AG04449 (cell line): ENCODE measurements at regions of chr17 and their contacts with region 1.

Region 1: DNA sequence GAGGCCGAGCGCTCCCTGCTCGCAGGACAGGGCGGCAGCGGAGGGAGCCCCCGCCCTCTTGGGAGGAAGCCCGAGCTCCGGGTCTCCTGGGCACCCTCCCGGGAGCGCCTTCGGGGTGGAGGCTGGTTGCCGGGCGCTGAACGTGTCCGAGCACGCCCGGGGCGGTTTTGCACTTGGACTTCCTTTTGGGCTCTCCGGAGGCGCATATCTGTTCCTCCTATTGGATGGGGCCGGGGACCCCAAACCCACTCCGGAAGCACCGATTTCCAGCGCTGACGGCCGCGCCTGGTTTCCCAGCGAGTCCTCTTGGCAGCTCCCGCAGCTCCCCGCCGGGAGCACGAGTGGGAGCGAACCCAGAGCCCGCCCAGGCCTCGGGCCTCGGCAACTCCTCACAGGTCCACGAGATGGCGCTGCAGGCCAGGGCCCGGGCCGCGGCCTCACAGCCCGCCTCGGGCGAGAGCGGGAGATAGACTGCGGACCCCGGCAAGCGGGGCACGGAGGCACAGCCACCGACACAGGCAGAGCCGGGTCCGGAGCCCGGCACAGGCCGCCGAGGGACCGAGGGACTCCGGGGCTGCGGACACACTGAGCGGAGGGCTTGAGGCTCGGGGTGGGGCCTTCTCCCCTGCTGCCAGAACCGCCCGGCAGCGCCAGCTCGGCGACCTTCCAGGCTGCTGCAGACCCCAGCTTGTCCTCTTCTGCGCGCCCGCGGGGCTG is 12.7 kb downstream of the TBX2 start:
- DNase-seq: no peak
- H3K4me3 ChIP-seq: peak overlapping the region; percentile 60
- CTCF ChIP-seq: peak; percentile 95

Region 2: DNA sequence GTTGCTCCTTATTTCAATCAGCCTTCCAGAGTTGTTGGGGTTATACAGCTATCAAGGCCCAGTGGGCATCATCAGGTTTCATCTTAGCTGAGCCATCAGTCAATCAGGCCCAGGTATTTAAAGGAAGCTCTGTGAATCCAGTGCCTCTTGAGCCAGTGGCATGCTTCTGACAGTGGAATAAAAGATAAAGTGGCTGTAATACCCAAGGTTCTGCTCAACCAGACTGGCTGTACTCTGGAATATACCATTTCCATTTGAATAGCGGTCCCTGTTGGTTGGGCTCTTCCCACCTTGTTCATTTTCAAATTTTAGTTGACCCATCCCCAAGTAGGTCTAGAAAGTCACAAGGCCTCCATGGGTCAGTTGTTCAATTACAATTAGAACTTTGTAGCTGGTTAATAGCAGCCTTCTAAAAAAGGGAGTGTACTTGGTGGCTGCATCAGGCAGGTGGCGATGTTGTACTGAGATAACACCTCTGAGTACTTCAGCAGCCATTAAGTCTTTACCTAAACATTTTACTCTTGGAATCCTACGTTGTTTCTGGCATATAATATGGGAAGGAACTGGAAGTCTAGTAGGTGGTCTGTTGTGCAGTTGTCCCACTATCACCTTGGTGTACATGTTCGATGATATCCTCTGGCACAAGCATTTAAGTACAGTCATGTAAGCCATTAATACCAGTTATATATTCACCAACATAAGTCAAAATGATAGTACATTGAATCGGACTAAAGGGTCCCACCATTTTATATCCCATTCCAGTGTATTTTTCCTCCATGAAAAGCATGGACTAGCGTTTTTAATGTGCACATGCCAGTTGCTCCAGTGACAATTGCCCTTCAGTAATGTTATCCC is 440.6 kb before region 1 on chr17:
- CTCF ChIA-PET with region 1: interaction called, 31 read pairs
- POLR2A ChIA-PET with region 1: no interaction called
- DNase-seq: peak; percentile 14
- H3K4me3 ChIP-seq: no peak overlapping the region
- CTCF ChIP-seq: peak; percentile 71

Region 3: GRCh38 chr17:61399131-61400057 is 12.9 kb before region 1 on chr17 and contains the start of gene TBX2:
- CTCF ChIA-PET with region 1: interaction called, 55 read pairs
- POLR2A ChIA-PET with region 1: interaction called, 6 read pairs
- DNase-seq: peak; percentile 82
- H3K4me3 ChIP-seq: peak within 1 kb of the TSS; percentile 76
- CTCF ChIP-seq: no peak

Region 4: GRCh38 chr17:61551255-61551742 is 139.0 kb after region 1 on chr17:
- CTCF ChIA-PET with region 1: interaction called, 188 read pairs
- POLR2A ChIA-PET with region 1: no interaction called
- DNase-seq: peak; percentile 3
- H3K4me3 ChIP-seq: no peak overlapping the region
- CTCF ChIP-seq: peak; percentile 32

Region 5: DNA sequence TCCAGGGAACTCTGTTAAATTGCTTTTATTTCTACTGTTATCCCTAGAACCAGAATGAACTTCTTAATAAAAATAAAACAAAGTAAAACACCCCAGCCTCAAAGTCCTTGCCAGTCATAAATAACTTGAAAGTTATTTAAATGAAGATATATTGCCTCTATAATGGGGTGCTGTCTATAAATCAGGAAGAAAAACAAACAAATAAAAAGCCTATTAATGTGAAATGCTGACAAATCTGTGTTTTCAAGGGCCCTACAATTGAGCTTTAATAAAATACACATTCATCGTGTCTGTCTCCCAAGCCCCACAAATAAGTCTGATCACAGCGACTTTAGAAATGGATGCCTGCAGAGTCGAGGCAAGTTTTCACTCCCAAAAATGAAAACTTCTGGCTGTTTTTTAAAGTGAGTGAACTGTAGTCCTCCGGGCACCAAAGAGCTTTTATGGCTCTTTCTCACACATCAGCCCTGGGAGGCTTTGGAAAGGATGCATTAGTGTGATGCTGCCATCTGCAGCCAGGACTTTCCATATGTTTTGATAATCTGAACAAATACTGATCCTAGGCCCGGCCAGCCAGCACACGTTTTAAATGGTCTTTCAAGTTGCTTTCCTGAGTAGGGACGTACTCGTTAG is 162.4 kb after region 1 on chr17:
- CTCF ChIA-PET with region 1: interaction called, 241 read pairs
- POLR2A ChIA-PET with region 1: no interaction called
- DNase-seq: no peak
- H3K4me3 ChIP-seq: no peak overlapping the region
- CTCF ChIP-seq: peak; percentile 39

Region 6: GRCh38 chr17:61635913-61636432 is 223.7 kb after region 1 on chr17:
- CTCF ChIA-PET with region 1: interaction called, 10 read pairs
- POLR2A ChIA-PET with region 1: no interaction called
- DNase-seq: no peak
- H3K4me3 ChIP-seq: no peak overlapping the region
- CTCF ChIP-seq: peak; percentile 62